Heart left ventricle (tissue), 16 donors: ENCODE measurements at regions of chr18 and their contacts with region 1.

Region 1: DNA sequence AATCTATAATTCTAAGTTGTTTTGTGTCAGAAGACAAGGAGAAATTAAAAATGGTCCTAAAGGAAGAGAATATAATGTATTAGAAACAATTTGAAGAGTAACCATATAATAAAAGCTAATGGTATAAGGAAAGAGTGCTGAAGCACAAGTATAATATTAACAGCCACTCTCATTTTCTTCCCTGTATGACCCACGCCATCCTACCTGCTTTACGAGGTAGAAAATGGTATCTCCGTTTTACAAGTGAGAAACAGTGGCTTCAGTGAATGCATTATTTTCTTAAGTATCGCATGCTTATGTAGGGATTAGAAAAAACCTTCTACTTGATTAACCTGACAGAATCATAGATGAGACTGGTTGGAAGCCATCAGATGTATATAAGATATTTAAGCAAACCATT is 266.2 kb downstream of the CCDC102B start:
- DNase-seq: no peak
- ATAC-seq: no peak
- H3K4me3 ChIP-seq: no peak overlapping the region
- H3K27ac ChIP-seq: no peak overlapping the region
- H3K4me1 ChIP-seq: no peaks in the 10 kb centered on the region
- H3K27me3 ChIP-seq: no peaks in the 10 kb centered on the region
- CTCF ChIP-seq: no peak
- POLR2A ChIP-seq: no peak

Region 2: DNA sequence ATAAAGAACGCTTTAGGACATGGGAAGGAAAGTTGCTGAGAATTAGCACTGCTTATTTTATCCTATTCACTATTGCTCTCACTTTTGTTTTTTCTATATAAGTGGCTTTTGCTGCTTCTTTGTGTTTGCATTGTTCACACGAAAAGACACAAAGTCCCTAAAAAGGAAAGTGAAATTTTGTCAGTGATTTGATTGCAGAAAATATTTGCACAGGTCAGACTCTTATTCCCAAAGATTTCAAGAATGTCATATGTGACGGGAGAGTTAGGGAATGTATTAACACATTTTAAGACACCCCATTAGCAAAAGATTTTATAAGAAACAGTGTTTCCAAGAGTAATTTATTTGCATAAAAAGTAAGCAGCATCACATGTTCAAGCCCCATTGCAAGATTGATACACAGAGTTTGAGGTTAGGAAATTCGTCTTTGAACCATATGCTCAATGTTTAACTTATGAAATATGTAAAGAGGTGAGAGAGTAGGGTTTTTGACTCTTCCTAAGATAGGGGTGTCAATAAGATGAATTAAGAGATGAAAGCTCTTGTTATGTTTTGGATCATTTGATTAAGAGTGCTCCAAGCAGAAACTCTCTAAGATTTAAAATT is 209.2 kb before region 1 on chr18:
- intact Hi-C with region 1: loop called in 1 of 10 experiments (anchors 10 kb)
- DNase-seq: no peak
- ATAC-seq: no peak
- H3K4me3 ChIP-seq: peak overlapping the region in 1 of 12 donors; percentile 16
- H3K27ac ChIP-seq: no peak overlapping the region
- H3K4me1 ChIP-seq: no peaks in the 10 kb centered on the region
- H3K27me3 ChIP-seq: no peaks in the 10 kb centered on the region
- CTCF ChIP-seq: no peak
- POLR2A ChIP-seq: no peak

Region 3: DNA sequence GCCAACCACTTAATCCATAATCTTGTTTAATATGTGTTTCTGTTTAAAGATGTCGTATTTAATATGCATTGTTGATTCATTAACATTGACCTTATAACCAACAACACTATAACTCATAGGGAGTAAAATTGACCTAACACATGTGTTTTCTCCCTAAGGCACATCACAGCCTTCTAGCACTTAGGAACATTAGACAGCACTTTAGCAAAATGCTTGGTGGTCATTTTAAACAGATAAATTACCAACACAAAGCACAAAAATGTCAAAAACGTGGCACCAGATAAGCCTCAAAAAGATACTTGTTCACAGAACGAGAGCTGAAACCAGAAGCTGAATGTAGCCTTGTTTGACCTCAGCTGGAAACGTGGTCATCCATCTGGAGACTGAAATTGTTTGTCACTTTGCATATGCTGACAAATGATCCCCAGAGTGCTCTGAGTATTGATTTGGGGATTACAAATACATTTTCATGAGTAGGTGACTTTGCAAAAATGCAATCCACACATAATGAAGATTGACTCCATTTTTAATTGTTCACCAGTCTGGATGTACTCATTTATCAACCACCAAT is 126.9 kb before region 1 on chr18:
- intact Hi-C with region 1: no loop called
- DNase-seq: no peak
- ATAC-seq: no peak
- H3K4me3 ChIP-seq: no peak overlapping the region
- H3K27ac ChIP-seq: no peak overlapping the region
- H3K4me1 ChIP-seq: no peaks in the 10 kb centered on the region
- H3K27me3 ChIP-seq: no peaks in the 10 kb centered on the region
- CTCF ChIP-seq: no peak
- POLR2A ChIP-seq: no peak

Region 4: GRCh38 chr18:69008538-69008937 is 55.5 kb before region 1 on chr18:
- intact Hi-C with region 1: no loop called
- DNase-seq: no peak
- ATAC-seq: no peak
- H3K4me3 ChIP-seq: no peak overlapping the region
- H3K27ac ChIP-seq: no peak overlapping the region
- H3K4me1 ChIP-seq: no peaks in the 10 kb centered on the region
- H3K27me3 ChIP-seq: no peaks in the 10 kb centered on the region
- CTCF ChIP-seq: no peak
- POLR2A ChIP-seq: no peak

Region 5: GRCh38 chr18:69109686-69110085 is 45.6 kb after region 1 on chr18:
- intact Hi-C with region 1: no loop called
- DNase-seq: no peak
- ATAC-seq: no peak
- H3K4me3 ChIP-seq: no peak overlapping the region
- H3K27ac ChIP-seq: no peak overlapping the region
- H3K4me1 ChIP-seq: no peaks in the 10 kb centered on the region
- H3K27me3 ChIP-seq: no peaks in the 10 kb centered on the region
- CTCF ChIP-seq: no peak
- POLR2A ChIP-seq: no peak